ENCODE measurements at regions of chr11 and their contacts with region 1.

Region 1: DNA sequence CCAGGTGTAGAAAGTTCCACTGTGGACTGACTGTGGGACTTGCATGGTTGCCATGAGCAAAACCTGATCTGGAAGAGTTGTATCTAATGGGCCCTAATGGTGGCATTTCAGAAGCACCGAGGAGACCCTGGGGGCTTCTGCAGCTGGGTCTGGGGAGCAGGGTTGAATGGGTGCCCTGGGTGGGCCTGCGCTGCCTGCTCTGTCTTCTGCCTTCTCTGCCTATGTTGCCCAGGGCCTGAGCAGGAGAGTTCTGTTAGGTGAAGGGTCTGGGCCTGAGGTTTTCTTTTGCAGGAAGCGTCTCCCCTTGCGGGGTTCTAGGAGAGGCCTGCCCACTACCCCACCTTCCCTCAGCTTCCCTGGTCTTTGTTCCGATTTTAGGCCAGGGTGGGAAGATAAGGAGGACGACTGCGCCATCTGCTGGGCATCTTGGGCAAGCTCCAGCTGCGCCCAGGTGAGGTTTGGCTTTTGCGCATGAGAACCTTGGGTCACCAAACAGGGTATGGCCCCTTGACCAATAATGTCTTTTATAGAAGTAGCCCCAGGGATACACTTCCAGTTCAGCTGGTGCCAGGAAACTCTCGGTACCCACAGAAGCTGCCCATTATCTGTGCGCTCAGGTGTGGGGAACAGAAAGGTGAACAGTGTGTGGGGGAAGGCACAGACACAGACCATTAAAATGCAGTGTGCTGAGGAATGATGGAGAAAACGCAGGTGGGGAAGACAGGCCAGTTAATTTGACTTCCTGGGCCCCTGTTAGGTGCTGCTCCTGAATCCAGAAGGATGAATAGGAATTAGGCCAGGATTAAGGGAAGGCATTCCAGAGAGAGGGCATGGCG is 23.2 kb downstream of the COMMD9 start:
- DNase-seq: peak; percentile 80
- ATAC-seq: peak; percentile 93
- H3K4me3 Mint-ChIP-seq: no peak overlapping the region
- H3K27ac Mint-ChIP-seq: no peak overlapping the region
- H3K4me1 Mint-ChIP-seq: peaks cover 2% of the 10 kb centered on the region
- H3K27me3 Mint-ChIP-seq: peaks cover 2% of the 10 kb centered on the region
- CTCF ChIP-seq: peak; percentile 82

Region 2: DNA sequence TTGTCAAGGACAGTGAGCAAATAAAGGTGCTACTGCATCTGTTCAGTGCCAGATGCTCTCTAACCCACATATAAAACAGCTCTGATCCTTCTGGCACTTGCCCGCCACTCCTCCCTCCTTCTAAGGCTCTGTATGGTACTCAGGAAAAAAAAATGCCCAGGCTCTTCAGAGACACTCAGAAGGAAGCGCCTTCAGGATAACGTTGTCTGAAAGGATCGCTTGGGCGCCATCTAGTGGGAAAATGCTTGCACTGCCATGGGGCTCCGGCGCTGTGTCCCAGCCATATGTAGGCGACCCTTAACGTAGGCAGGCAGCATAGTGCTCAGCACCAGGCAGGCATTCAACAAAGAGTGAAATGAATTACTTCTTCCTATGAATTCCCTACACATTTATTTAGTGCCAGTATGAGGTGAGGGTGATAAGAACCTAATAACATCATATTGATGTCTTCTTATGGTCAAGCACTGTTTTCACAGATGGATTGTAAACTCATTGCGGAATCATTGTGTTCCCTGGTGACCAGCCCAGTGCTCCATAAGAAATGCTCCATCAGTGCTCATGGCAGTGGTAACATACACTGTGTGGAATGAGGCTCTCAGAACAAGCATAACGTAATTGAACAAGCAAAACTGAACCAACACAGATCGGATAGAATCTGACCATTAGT is 780.2 kb before region 1 on chr11:
- CTCF ChIA-PET with region 1: interaction called, 13 read pairs
- POLR2A ChIA-PET with region 1: interaction called, 4 read pairs
- DNase-seq: peak; percentile 93
- ATAC-seq: peak; percentile 98
- H3K4me3 Mint-ChIP-seq: no peak overlapping the region
- H3K27ac Mint-ChIP-seq: no peak overlapping the region
- H3K4me1 Mint-ChIP-seq: no peaks in the 10 kb centered on the region
- H3K27me3 Mint-ChIP-seq: peaks cover 12% of the 10 kb centered on the region; the same call in 1 of the 2 replicates
- CTCF ChIP-seq: peak; percentile 82

Region 3: GRCh38 chr11:36156161-36156816 is 109.7 kb before region 1 on chr11:
- CTCF ChIA-PET with region 1: interaction called, 25 read pairs
- POLR2A ChIA-PET with region 1: no interaction called
- DNase-seq: no peak
- ATAC-seq: peak; percentile 28
- H3K4me3 Mint-ChIP-seq: no peak overlapping the region
- H3K27ac Mint-ChIP-seq: no peak overlapping the region
- H3K4me1 Mint-ChIP-seq: peaks cover 32% of the 10 kb centered on the region
- H3K27me3 Mint-ChIP-seq: no peaks in the 10 kb centered on the region
- CTCF ChIP-seq: no peak

Region 4: GRCh38 chr11:36300651-36301050 is 34.6 kb after region 1 on chr11:
- CTCF ChIA-PET with region 1: no interaction called
- POLR2A ChIA-PET with region 1: no interaction called
- DNase-seq: no peak
- ATAC-seq: no peak
- H3K4me3 Mint-ChIP-seq: no peak overlapping the region
- H3K27ac Mint-ChIP-seq: no peak overlapping the region
- H3K4me1 Mint-ChIP-seq: no peaks in the 10 kb centered on the region
- H3K27me3 Mint-ChIP-seq: peaks cover 2% of the 10 kb centered on the region; the same call in 1 of the 2 replicates
- CTCF ChIP-seq: no peak

Region 5: GRCh38 chr11:36478700-36479329 is 212.8 kb after region 1 on chr11:
- CTCF ChIA-PET with region 1: interaction called, 16 read pairs
- POLR2A ChIA-PET with region 1: no interaction called
- DNase-seq: no peak
- ATAC-seq: peak; percentile 60
- H3K4me3 Mint-ChIP-seq: no peak overlapping the region
- H3K27ac Mint-ChIP-seq: no peak overlapping the region
- H3K4me1 Mint-ChIP-seq: no peaks in the 10 kb centered on the region
- H3K27me3 Mint-ChIP-seq: peaks cover 9% of the 10 kb centered on the region; the same call in 1 of the 2 replicates
- CTCF ChIP-seq: no peak